ENCODE measurements at regions of chr14 and their contacts with region 1.

Region 1: GRCh38 chr14:46344327-46344937 is 307.1 kb downstream of the RPL10L start:
- DNase-seq: peak; percentile 15
- ATAC-seq: peak; percentile 86
- H3K4me3 ChIP-seq: no peak overlapping the region
- H3K27ac ChIP-seq: no peak overlapping the region
- H3K4me1 ChIP-seq: no peaks in the 10 kb centered on the region
- H3K27me3 ChIP-seq: no peaks in the 10 kb centered on the region
- CTCF ChIP-seq: peak; percentile 55
- EP300 ChIP-seq: no peak
- POLR2A ChIP-seq: no peak
- RAD21 ChIP-seq: no peak

Region 2: DNA sequence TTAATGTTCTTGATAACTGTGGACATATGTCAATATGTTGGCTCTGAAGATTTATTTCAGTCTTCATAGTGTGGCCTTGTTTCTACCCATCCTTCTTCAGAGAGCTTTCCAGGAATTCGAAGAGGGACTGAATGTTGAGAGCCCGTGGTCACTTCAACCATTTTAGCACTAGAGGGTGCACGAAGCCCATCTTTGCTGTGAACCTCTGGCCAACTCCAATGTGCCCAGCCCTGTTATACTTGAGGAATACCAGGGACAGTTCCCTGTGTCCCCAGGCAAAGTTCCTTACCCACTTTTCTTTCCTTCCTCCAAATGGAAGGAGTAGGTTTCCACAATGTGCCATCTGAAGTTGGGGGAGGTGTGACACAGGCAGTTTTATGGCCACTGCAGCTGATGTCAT is 296.3 kb before region 1 on chr14:
- CTCF ChIA-PET with region 1: no interaction called
- POLR2A ChIA-PET with region 1: no interaction called
- in situ Hi-C with region 1: no loop called
- intact Hi-C with region 1: loop called (anchors 1 kb)
- DNase-seq: peak; percentile 4
- ATAC-seq: no peak
- H3K4me3 ChIP-seq: no peak overlapping the region
- H3K27ac ChIP-seq: no peak overlapping the region
- H3K4me1 ChIP-seq: no peaks in the 10 kb centered on the region
- H3K27me3 ChIP-seq: no peaks in the 10 kb centered on the region
- CTCF ChIP-seq: peak; percentile 68
- EP300 ChIP-seq: no peak
- POLR2A ChIP-seq: no peak
- RAD21 ChIP-seq: no peak

Region 3: GRCh38 chr14:46250113-46250703 is 94.2 kb before region 1 on chr14:
- CTCF ChIA-PET with region 1: no interaction called
- POLR2A ChIA-PET with region 1: no interaction called
- in situ Hi-C with region 1: no loop called
- intact Hi-C with region 1: loop called (anchors 1 kb)
- DNase-seq: peak; percentile 2
- ATAC-seq: no peak
- H3K4me3 ChIP-seq: no peak overlapping the region
- H3K27ac ChIP-seq: no peak overlapping the region
- H3K4me1 ChIP-seq: no peaks in the 10 kb centered on the region
- H3K27me3 ChIP-seq: no peaks in the 10 kb centered on the region
- CTCF ChIP-seq: peak; percentile 37
- EP300 ChIP-seq: no peak
- POLR2A ChIP-seq: no peak
- RAD21 ChIP-seq: no peak

Region 4: DNA sequence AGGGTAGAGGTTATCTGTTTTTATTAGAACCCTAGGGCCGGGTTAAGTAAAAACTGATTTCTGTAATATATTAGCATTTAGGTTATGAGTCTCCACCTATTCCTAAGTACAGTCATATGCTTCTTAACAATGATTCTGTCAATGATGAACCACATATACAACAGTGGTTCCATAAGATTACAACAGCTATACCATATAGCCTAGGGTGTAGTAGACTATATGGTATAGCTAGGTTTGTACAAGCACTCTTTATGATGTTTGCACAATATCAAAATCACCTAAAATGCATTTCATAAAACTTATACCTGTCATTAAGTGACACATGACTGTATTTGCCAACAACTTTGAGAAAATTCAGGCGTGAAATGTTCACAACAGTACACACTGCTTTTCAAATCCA is 196.6 kb after region 1 on chr14:
- CTCF ChIA-PET with region 1: no interaction called
- POLR2A ChIA-PET with region 1: no interaction called
- in situ Hi-C with region 1: no loop called
- intact Hi-C with region 1: no loop called
- DNase-seq: no peak
- ATAC-seq: no peak
- H3K4me3 ChIP-seq: no peak overlapping the region
- H3K27ac ChIP-seq: no peak overlapping the region
- H3K4me1 ChIP-seq: no peaks in the 10 kb centered on the region
- H3K27me3 ChIP-seq: no peaks in the 10 kb centered on the region
- CTCF ChIP-seq: no peak
- EP300 ChIP-seq: no peak
- POLR2A ChIP-seq: no peak
- RAD21 ChIP-seq: no peak